Activated CD8-positive, alpha-beta memory T cell treated with anti-CD3 and anti-CD28 coated beads, Interleukin-2, amount 10 ng/mL, durations not matched to agents 7 days and 5 days (primary cell): ENCODE measurements at regions of chr6 and their contacts with region 1.

Region 1: DNA sequence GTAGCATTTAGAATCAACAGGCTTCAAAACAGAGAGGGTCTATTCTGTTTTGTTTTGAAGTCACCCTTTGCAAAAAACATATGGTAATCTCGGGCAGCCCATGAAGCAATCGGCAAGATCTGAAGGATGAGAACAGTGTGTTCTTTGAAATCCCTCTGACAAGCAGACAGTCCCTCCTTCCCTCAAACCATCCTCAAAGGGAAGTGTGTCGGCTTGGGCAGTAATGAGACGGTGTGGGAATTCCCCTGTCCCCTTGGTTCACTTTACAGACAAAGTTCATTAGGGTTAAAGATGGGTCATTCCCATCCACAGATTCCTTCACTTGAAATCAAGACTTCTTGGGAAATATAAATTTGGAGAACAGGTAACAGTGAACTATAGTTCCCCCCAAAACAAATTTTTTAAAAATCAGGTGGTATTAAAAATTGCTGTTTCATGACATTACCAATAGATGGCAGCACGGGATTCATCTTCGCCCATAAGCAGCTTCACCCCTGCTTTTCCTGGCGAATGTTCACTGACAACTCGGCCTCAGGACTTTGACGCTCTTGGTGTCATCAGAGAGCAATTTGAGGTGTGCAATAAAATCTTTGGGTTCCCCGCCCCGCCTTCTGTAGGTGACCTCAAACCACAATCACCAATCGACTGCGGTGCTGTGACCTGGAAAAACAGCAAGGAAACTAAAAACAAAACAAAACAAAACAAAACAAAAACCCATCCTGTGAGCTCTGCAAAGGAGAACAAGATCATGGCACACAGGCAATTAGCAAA is 159.3 kb upstream of the TNFAIP3 start:
- DNase-seq: peak; percentile 94
- ATAC-seq: peak; percentile 82
- H3K4me3 Mint-ChIP-seq: peak overlapping the region; percentile 59
- H3K27ac Mint-ChIP-seq: peak overlapping the region; percentile 90
- H3K4me1 Mint-ChIP-seq: peaks cover 71% of the 10 kb centered on the region
- H3K27me3 Mint-ChIP-seq: no peaks in the 10 kb centered on the region

Region 2: GRCh38 chr6:137799950-137800568 is 92.3 kb after region 1 on chr6:
- CTCF ChIA-PET with region 1: interaction called, 27 read pairs
- DNase-seq: peak; percentile 77
- ATAC-seq: peak; percentile 90
- H3K4me3 Mint-ChIP-seq: no peak overlapping the region
- H3K27ac Mint-ChIP-seq: peak overlapping the region; percentile 62
- H3K4me1 Mint-ChIP-seq: peaks cover 55% of the 10 kb centered on the region
- H3K27me3 Mint-ChIP-seq: no peaks in the 10 kb centered on the region

Region 3: DNA sequence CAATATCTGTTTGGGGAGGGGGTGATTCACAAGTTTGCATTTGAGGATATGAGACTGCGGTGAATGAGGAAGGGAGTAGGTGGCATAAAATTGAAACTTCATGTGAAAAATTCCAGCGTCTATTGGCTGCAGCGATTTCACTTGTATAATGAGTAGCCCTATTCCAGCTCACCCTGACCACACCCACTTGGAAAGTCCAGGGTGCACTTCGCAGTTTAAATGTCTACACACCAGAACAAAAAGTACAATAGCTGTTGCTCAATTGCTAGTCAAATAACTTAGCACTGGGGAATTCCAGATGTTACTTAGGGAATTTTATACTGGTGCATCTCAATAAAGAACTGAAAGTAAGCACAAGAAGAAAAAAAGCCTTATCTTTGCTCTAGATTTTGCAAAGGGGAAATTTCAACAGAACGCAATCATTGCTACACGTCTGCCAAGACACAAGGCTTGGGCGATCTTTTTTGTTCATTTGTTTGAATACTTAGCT is 165.5 kb after region 1 on chr6:
- CTCF ChIA-PET with region 1: interaction called, 73 read pairs
- DNase-seq: peak; percentile 72
- ATAC-seq: peak; percentile 9
- H3K4me3 Mint-ChIP-seq: peak overlapping the region; percentile 79
- H3K27ac Mint-ChIP-seq: peak overlapping the region; percentile 93
- H3K4me1 Mint-ChIP-seq: peaks cover 78% of the 10 kb centered on the region
- H3K27me3 Mint-ChIP-seq: no peaks in the 10 kb centered on the region

Region 4: DNA sequence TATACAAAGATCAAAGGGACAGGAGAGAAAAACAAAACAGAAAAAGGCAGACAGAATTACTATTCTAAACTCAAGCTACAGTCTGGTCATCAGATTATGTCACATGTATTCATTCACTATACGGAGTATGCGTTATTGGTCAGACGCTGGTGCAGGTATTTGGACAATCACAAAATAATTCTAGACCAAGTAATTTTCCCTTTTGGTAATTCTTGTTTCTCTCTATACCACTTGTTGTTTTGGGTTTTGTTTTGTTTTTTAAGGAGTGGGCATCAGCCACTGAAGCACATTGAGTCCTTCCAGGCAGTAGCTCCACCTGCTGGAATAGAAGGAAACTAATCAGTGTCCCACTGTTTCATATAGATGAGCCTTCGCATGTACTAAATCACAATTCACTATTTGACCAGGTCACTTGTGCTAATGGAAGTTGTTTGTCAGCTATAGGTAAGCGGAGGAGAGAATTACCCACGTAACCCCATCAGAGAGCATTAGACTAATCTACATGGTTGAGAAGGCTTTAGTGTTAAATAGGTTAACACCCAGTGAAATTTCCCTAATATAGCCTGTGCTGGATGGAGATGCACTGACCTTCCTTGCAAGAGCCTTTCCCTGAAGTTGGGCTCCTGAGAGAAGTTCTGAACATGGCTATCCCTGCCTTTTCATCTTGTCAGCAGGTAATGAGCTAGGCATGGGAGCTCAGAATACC is 237.2 kb after region 1 on chr6:
- CTCF ChIA-PET with region 1: interaction called, 38 read pairs
- DNase-seq: peak; percentile 47
- ATAC-seq: peak; percentile 73
- H3K4me3 Mint-ChIP-seq: no peak overlapping the region
- H3K27ac Mint-ChIP-seq: no peak overlapping the region
- H3K4me1 Mint-ChIP-seq: peaks cover 45% of the 10 kb centered on the region
- H3K27me3 Mint-ChIP-seq: no peaks in the 10 kb centered on the region

Region 5: DNA sequence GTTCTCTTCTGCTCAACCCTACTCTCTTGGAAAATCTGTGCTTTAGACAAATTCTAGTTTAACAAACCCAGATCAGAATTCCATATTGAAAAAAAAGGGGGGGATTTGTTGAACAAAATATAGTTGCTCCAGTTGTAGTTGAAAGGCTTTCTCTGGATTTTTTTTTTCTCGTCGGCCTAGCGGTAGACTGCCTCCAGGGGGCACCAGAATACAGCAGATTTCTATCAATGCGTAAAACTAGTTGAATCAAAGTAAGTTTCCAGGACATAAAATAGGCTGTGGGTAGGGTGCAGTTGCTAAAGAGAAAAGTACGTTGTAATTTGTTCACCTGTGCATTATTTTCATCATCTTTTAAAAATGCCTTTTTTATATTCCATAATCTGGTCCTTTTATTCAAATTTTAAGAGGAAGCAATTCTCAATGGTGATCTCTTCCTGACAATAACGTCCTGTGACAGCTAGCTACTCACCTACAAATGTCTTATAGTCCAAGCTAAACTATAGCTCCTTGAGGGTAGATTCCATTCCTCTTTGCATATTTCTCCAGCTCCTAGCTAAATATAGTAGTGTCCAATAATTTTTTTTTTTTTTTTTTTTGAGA is 294.1 kb after region 1 on chr6:
- CTCF ChIA-PET with region 1: interaction called, 31 read pairs
- DNase-seq: peak; percentile 77
- ATAC-seq: no peak
- H3K4me3 Mint-ChIP-seq: no peak overlapping the region
- H3K27ac Mint-ChIP-seq: no peak overlapping the region
- H3K4me1 Mint-ChIP-seq: peaks cover 11% of the 10 kb centered on the region
- H3K27me3 Mint-ChIP-seq: peaks cover 3% of the 10 kb centered on the region